Transverse colon (tissue), 4 donors: ENCODE measurements at regions of chr19 and their contacts with region 1.

Region 1: GRCh38 chr19:2475702-2476450 is at the start of gene GADD45B:
- DNase-seq: peak; percentile 98
- H3K4me3 ChIP-seq: peak within 1 kb of the TSS; percentile 67 to 95 (median 82)
- H3K27ac ChIP-seq: peak within 1 kb of the TSS; percentile 91 to 96 (median 93)
- H3K4me1 ChIP-seq: peaks cover 10 to 43% (median 36%) of the 10 kb centered on the region in 4 donors
- H3K27me3 ChIP-seq: no peaks in the 10 kb centered on the region
- CTCF ChIP-seq: no peak
- EP300 ChIP-seq: peak; percentile 80
- POLR2A ChIP-seq: peak; percentile 100
- total RNA-seq, gene GADD45B: 59.0 to 280 (median 167) TPM

Region 2: DNA sequence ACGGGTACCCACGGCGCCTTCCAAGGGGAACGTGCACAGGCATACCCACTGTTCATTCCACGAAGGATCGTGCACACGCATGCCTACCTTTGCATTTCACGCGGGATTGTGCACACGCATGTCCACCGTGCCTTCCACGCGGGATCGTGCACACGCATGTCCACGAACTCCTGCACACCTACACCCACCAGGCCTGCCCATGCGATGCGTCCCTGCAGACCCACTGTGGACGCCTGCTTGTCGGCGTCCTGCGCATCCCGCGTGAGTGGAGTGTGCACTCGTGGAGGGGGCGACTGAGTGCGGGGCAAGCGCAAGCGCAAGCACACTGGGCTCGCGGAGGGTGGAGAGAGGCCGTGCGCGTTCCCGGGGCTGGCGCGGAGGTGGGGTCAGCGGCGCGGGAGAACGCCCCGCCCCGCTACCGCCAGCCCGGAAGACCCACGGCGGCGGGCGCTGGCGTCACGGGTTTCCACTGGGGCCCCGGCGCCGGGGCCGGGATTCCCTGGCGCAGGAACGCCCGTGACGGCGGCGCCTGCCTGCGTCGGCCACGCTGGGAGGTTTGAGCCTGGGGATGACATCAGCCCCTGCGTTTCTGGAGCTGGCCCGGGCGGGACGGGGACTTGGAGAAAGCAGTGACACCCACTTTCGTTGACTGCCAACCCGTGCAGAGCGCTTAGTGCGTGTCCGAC is 18.7 kb after region 1 on chr19:
- in situ Hi-C with region 1: no loop called
- intact Hi-C with region 1: loop called (anchors 2 kb)
- DNase-seq: peak; percentile 82
- H3K4me3 ChIP-seq: peak overlapping the region; percentile 45 to 54 (median 48)
- H3K27ac ChIP-seq: peak overlapping the region; percentile 71 to 95 (median 90)
- H3K4me1 ChIP-seq: peaks cover 23 to 46% (median 36%) of the 10 kb centered on the region in 4 donors
- H3K27me3 ChIP-seq: peaks cover under 1% of the 10 kb centered on the region
- CTCF ChIP-seq: no peak
- EP300 ChIP-seq: no peak
- POLR2A ChIP-seq: peak; percentile 59

Region 3: DNA sequence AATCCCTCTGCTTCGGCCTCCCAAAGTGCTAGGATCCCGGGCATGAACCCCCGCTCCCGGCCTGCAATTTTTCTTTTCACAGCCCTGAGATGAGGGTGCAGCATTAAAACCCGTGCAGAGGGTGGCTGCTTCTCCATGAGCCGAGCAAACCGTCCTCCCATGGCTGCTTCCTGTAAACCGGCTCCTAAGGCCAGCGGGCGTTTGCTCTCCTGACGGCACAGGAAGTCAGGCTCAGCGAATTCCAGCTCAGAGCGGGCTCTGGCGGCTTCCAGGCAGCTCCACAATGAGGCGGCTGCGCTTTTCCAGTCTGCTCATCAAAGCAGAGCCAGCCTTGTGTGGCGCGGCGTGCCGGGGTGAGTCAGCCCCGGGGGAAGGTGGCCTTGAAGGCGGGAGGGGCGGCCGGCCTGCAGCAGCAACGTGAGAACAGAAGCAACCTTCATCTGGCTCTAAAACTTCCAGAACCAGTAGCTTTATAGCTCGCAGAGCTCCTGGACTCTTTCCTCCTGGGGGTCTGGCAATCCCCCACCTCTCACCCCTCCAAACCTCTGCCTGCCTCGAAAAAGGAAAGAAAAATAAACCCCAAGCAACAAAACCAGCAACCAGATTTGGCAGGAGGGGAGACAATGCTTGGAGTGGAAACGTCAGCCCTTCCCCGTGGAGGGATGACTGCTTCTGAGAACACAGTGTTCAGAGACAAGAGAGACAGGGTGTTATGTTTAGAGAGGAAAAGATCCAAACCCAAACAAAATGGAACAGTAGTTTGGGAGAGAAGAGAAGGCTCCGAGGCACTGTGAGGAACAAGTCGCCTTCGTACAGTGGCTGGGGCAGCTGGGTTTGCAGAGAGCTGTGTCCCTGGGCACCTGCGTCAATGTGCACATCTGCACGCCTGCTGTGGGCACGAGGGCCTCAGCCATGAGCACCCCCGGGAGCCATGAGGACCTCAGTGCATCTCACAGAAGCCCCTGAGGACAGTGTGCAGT is 67.9 kb after region 1 on chr19:
- in situ Hi-C with region 1: no loop called
- intact Hi-C with region 1: loop called (anchors 1 kb)
- DNase-seq: peak; percentile 90
- H3K4me3 ChIP-seq: peak overlapping the region in 2 of 4 donors; percentile 11 to 33
- H3K27ac ChIP-seq: peak overlapping the region; percentile 89 to 93 (median 90)
- H3K4me1 ChIP-seq: peaks cover 42 to 76% (median 59%) of the 10 kb centered on the region in 4 donors
- H3K27me3 ChIP-seq: no peaks in the 10 kb centered on the region
- CTCF ChIP-seq: peak in 2 of 5 experiments; percentile 16 to 42
- EP300 ChIP-seq: peak; percentile 94
- POLR2A ChIP-seq: peak; percentile 46

Region 4: GRCh38 chr19:2578901-2579677 is 103.2 kb after region 1 on chr19:
- in situ Hi-C with region 1: no loop called
- intact Hi-C with region 1: loop called (anchors 2 kb)
- DNase-seq: peak; percentile 89
- H3K4me3 ChIP-seq: peak overlapping the region in 3 of 4 donors; percentile 23 to 47 (median 27)
- H3K27ac ChIP-seq: peak overlapping the region; percentile 77 to 87 (median 81)
- H3K4me1 ChIP-seq: peaks cover 15 to 39% (median 28%) of the 10 kb centered on the region in 4 donors
- H3K27me3 ChIP-seq: no peaks in the 10 kb centered on the region
- CTCF ChIP-seq: peak; percentile 82 to 97 (median 90)
- EP300 ChIP-seq: peak; percentile 77
- POLR2A ChIP-seq: no peak

Region 5: DNA sequence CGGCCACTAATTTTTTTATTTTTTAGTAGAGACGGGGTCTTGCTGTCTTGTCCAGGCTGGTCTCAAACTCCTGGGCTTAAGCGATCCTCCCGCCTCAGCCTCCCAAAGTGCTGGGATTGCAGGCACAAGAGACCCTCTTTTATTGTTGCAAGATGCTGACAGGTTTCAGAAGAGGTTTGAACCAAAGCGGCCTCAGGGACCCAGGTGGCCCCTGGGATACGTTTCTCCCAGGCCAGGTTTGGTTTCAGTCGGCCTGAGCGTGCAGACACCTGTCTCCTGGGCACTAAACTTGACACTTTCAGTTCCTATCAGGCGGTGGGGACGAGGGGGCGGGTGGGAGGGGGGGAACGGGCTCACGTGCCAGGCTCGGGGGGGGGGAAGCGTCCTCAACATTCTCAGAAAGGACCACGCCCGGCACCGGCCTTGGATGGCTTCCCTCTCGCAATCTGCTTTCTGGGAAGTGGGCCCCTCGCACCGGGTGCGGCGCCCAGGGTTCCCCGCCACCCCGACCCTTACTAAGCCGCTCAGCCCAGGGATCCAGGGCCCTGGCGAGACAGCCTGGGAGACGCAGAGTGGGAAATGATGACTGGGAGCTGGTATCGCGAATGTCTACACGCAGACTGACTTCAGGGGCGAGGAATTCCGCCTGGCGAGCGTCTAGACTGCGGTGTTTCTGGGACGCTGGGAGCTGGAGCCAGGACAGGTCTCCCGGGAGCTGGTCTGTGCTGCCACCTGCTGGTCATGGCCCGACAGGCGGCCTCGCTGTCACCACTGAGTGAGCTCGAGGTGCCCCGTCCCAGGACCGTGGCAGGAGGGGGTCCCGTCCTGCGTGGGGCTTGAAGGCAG is 135.0 kb after region 1 on chr19:
- in situ Hi-C with region 1: loop called in 3 of 4 experiments (anchors 5 to 10 kb)
- intact Hi-C with region 1: loop called (anchors 1 kb)
- DNase-seq: peak; percentile 95
- H3K4me3 ChIP-seq: peak overlapping the region; percentile 24 to 53 (median 30)
- H3K27ac ChIP-seq: peak overlapping the region; percentile 74 to 82 (median 76)
- H3K4me1 ChIP-seq: peaks cover 0 to 19% (median 8%) of the 10 kb centered on the region in 4 donors
- H3K27me3 ChIP-seq: no peaks in the 10 kb centered on the region
- CTCF ChIP-seq: peak; percentile 96 to 98 (median 97)
- EP300 ChIP-seq: peak; percentile 65
- POLR2A ChIP-seq: no peak

Region 6: DNA sequence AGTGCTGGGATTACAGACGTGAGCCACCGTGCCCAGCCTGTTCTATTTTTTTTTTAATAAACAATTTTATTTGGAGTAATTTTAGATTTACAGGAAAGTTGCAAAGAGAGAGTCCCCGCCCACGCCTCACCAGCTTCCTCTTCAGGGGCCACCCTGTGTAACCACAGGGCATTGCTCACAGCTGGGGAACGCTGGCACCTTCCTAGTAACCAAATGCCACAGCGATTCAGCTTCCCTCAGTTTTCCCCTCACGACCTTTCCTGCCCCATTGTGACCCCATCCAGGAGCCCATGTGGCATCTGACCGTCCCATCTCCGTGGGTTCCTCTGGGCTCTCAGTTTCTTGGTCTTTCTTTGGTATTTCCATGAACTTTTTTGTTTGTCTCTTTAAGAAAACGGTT is 142.7 kb after region 1 on chr19:
- in situ Hi-C with region 1: loop called in 3 of 4 experiments (anchors 5 to 10 kb)
- intact Hi-C with region 1: no loop called
- DNase-seq: peak; percentile 74
- H3K4me3 ChIP-seq: no peak overlapping the region
- H3K27ac ChIP-seq: peak overlapping the region; percentile 17 to 55 (median 35)
- H3K4me1 ChIP-seq: peaks cover 0 to 31% (median 3%) of the 10 kb centered on the region in 4 donors
- H3K27me3 ChIP-seq: no peaks in the 10 kb centered on the region
- CTCF ChIP-seq: no peak
- EP300 ChIP-seq: no peak
- POLR2A ChIP-seq: no peak